Thyroid gland (tissue), 4 donors: ENCODE measurements at regions of chr17 and their contacts with region 1.

Region 1: GRCh38 chr17:69567130-69567529 is 152.6 kb downstream of the MAP2K6 start:
- DNase-seq: peak in 1 of 2 donors; percentile 12
- H3K4me3 ChIP-seq: no peak overlapping the region
- H3K27ac ChIP-seq: no peak overlapping the region
- H3K4me1 ChIP-seq: peaks cover 5 to 8% of the 10 kb centered on the region in 2 donors
- H3K27me3 ChIP-seq: no peaks in the 10 kb centered on the region
- CTCF ChIP-seq: no peak
- POLR2A ChIP-seq: no peak

Region 2: DNA sequence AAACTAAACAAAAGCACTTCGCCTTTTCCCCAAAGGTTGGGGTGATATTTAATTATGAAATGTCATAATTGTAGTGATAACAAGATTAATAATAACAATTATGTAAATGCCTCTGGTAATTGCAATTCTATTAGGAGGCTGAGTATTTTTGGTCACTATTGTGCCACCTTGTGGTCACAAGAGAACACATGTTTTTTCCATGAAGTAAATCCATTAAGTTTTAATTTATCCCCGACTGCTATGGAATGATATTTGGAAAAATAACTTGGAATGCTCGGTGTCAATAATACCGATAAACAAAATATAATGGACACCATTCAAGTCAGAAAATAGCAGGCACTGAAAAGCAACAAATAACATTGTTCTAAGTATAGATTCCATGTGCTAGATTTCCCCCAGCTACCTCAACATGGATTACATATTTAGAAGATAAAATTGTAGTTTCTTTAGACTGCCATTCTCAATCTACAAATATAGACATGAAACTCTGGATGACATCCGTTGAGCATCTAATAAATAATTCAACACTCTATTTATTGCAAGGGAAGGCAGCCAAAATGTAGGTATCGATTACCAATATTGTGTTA is 577.2 kb after region 1 on chr17:
- intact Hi-C with region 1: loop called (anchors 10 kb)
- DNase-seq: no peak
- H3K4me3 ChIP-seq: no peak overlapping the region
- H3K27ac ChIP-seq: no peak overlapping the region
- H3K4me1 ChIP-seq: peaks cover 0 to 5% of the 10 kb centered on the region in 2 donors
- H3K27me3 ChIP-seq: no peaks in the 10 kb centered on the region
- CTCF ChIP-seq: peak; percentile 52 to 82 (median 62)
- POLR2A ChIP-seq: no peak